ENCODE measurements at regions of chr11 and their contacts with region 1.

Region 1: DNA sequence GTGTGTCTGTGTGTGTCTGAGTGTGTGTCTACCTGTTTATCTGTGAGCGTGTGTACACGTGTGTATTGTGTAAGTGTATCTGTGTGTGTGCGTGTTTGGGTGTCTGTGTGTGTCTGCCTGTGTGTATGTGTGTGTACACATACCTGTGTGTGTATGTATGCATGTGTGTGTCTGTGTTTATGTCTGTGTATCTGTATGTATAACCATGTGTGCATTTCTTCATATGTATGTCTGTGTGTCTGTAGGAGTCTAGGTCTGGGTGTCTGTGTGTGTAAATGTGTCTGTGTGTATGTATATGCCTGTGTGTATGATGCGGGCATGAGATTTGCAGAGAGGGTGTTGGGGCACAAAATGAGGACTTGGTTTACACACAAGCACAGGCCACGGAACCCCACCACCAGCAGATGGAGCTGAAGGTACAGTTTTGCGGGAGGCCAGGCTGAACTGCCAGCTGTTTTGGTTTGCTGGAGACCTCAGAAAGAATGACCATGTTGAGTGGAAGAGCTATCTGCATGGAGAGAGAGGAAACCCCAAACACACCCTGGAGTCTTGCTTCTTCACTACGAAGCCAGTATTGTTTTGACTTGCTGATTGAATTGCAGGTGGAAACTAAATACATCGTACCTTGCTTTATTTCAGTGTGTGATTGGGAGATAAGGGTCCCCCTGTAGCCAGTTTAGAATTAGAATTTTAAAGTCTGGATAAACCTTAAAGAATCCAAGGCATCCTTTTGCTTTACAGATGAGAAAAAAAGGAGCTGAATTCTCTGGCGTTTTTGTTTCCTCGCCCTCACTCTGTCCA is 497.2 kb downstream of the NTM start:
- DNase-seq: peak; percentile 72 to 76
- H3K4me3 ChIP-seq: no peak overlapping the region
- H3K4me3 Mint-ChIP-seq: no peak overlapping the region
- H3K27ac Mint-ChIP-seq: no peak overlapping the region
- H3K4me1 ChIP-seq: no peaks in the 10 kb centered on the region
- H3K4me1 Mint-ChIP-seq: no peaks in the 10 kb centered on the region
- H3K27me3 ChIP-seq: no peaks in the 10 kb centered on the region
- H3K27me3 Mint-ChIP-seq: peaks cover 17% of the 10 kb centered on the region
- CTCF ChIP-seq: peak; percentile 73 to 79

Region 2: DNA sequence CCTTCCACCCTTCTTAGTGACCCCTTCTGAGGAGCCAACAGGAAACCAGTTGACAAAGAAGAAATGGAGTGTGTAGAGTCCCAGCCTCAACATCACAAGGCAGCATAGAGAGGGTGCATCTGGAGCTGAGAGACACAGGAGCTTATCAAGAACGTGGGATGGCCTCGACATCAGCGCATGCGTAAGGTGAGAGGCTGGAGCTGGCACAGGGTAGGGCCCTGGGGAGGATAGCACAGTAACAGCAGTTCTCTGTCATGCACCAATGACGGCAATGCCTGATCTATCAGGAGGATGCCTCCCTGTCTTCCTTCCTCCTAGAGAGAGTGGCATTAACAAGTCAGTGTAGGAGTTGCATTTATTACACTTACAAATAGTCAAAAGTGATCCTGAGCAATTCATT is 71.1 kb before region 1 on chr11:
- CTCF ChIA-PET with region 1: no interaction called
- POLR2A ChIA-PET with region 1: no interaction called
- intact Hi-C with region 1: no loop called
- DNase-seq: no peak
- H3K4me3 ChIP-seq: no peak overlapping the region
- H3K4me3 Mint-ChIP-seq: no peak overlapping the region
- H3K27ac Mint-ChIP-seq: no peak overlapping the region
- H3K4me1 ChIP-seq: no peaks in the 10 kb centered on the region
- H3K4me1 Mint-ChIP-seq: no peaks in the 10 kb centered on the region
- H3K27me3 ChIP-seq: no peaks in the 10 kb centered on the region
- H3K27me3 Mint-ChIP-seq: peaks cover 17% of the 10 kb centered on the region
- CTCF ChIP-seq: no peak

Region 3: GRCh38 chr11:131914361-131914774 is 46.7 kb after region 1 on chr11:
- CTCF ChIA-PET with region 1: no interaction called
- POLR2A ChIA-PET with region 1: no interaction called
- intact Hi-C with region 1: no loop called
- DNase-seq: no peak
- H3K4me3 ChIP-seq: no peak overlapping the region
- H3K4me3 Mint-ChIP-seq: no peak overlapping the region
- H3K27ac Mint-ChIP-seq: no peak overlapping the region
- H3K4me1 ChIP-seq: no peaks in the 10 kb centered on the region
- H3K4me1 Mint-ChIP-seq: no peaks in the 10 kb centered on the region
- H3K27me3 ChIP-seq: no peaks in the 10 kb centered on the region
- H3K27me3 Mint-ChIP-seq: peaks cover 2% of the 10 kb centered on the region
- CTCF ChIP-seq: peak in 1 of 2 experiments; percentile 11

Region 4: GRCh38 chr11:132028380-132029240 is 161.0 kb after region 1 on chr11:
- CTCF ChIA-PET with region 1: no interaction called
- POLR2A ChIA-PET with region 1: no interaction called
- intact Hi-C with region 1: loop called (anchors 1 kb)
- DNase-seq: peak; percentile 53 to 55
- H3K4me3 ChIP-seq: no peak overlapping the region
- H3K4me3 Mint-ChIP-seq: no peak overlapping the region
- H3K27ac Mint-ChIP-seq: no peak overlapping the region
- H3K4me1 ChIP-seq: no peaks in the 10 kb centered on the region
- H3K4me1 Mint-ChIP-seq: no peaks in the 10 kb centered on the region
- H3K27me3 ChIP-seq: no peaks in the 10 kb centered on the region
- H3K27me3 Mint-ChIP-seq: peaks cover 6% of the 10 kb centered on the region
- CTCF ChIP-seq: peak; percentile 58 to 71

Region 5: DNA sequence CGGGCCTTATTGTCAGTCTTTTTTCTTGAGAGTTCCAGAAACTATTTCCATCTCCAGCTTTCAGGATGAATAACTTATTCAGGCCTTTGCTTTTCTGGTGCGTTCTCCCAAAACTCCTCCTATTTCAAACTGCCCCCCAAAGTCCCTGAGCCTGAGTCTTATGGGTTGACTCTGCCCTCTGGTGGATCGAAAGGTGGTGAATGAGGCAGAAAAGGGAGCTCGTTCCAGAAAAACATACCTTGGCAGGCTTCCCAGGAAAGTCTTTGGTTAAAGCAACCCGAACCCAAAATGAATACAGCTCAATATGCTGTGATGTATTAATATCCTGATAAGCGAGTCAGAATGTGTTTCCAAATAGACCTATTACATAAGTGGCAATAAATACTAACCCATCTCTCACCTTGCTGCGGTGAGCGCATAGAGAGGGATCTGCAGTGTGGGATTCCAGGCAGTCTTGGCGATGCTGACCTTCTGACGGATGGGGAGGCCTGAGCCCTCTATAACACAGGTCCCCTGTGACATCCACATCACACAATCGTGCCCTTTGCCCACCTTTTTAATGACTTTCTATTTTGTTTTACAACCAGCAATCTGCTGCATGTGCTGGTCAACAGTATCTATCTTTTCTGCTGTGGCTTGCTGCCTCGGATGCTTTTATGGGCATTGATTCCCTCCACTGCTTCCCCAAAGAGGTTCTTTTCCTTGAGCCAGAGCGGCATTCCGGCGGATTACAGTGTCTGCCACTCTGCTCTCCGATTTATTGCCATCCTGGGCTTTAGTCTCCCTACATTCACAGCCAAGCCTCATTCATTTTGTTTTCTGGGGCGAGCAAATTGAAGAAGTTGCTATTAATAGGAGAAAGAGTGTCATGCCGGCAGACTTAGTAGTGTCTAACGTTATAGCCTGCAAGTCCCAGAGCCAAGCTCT is 259.6 kb after region 1 on chr11:
- CTCF ChIA-PET with region 1: interaction called, 7 read pairs
- POLR2A ChIA-PET with region 1: no interaction called
- intact Hi-C with region 1: loop called (anchors 2 kb)
- DNase-seq: peak in 1 of 2 experiments; percentile 10
- H3K4me3 ChIP-seq: no peak overlapping the region
- H3K4me3 Mint-ChIP-seq: no peak overlapping the region
- H3K27ac Mint-ChIP-seq: no peak overlapping the region
- H3K4me1 ChIP-seq: no peaks in the 10 kb centered on the region
- H3K4me1 Mint-ChIP-seq: no peaks in the 10 kb centered on the region
- H3K27me3 ChIP-seq: no peaks in the 10 kb centered on the region
- H3K27me3 Mint-ChIP-seq: peaks cover 6% of the 10 kb centered on the region
- CTCF ChIP-seq: peak in 1 of 2 experiments; percentile 15

Region 6: GRCh38 chr11:132158093-132158492 is 290.4 kb after region 1 on chr11:
- CTCF ChIA-PET with region 1: no interaction called
- POLR2A ChIA-PET with region 1: no interaction called
- intact Hi-C with region 1: loop called (anchors 1 kb)
- DNase-seq: peak; percentile 40 to 50
- H3K4me3 ChIP-seq: no peak overlapping the region
- H3K4me3 Mint-ChIP-seq: no peak overlapping the region
- H3K27ac Mint-ChIP-seq: no peak overlapping the region
- H3K4me1 ChIP-seq: no peaks in the 10 kb centered on the region
- H3K4me1 Mint-ChIP-seq: no peaks in the 10 kb centered on the region
- H3K27me3 ChIP-seq: no peaks in the 10 kb centered on the region
- H3K27me3 Mint-ChIP-seq: peaks cover 7% of the 10 kb centered on the region
- CTCF ChIP-seq: peak; percentile 38 to 45

Region 7: GRCh38 chr11:133064152-133064877 is 1196.7 kb after region 1 on chr11:
- CTCF ChIA-PET with region 1: no interaction called
- POLR2A ChIA-PET with region 1: no interaction called
- intact Hi-C with region 1: loop called (anchors 5 kb)
- DNase-seq: peak; percentile 67 to 72
- H3K4me3 ChIP-seq: no peak overlapping the region
- H3K4me3 Mint-ChIP-seq: peak overlapping the region; percentile 12
- H3K27ac Mint-ChIP-seq: no peak overlapping the region
- H3K4me1 ChIP-seq: no peaks in the 10 kb centered on the region
- H3K4me1 Mint-ChIP-seq: no peaks in the 10 kb centered on the region
- H3K27me3 ChIP-seq: no peaks in the 10 kb centered on the region
- H3K27me3 Mint-ChIP-seq: peaks cover 15% of the 10 kb centered on the region
- CTCF ChIP-seq: peak; percentile 55 to 69